CD4-positive, alpha-beta memory T cell (primary cell): ENCODE measurements at regions of chr19 and their contacts with region 1.

Region 1: DNA sequence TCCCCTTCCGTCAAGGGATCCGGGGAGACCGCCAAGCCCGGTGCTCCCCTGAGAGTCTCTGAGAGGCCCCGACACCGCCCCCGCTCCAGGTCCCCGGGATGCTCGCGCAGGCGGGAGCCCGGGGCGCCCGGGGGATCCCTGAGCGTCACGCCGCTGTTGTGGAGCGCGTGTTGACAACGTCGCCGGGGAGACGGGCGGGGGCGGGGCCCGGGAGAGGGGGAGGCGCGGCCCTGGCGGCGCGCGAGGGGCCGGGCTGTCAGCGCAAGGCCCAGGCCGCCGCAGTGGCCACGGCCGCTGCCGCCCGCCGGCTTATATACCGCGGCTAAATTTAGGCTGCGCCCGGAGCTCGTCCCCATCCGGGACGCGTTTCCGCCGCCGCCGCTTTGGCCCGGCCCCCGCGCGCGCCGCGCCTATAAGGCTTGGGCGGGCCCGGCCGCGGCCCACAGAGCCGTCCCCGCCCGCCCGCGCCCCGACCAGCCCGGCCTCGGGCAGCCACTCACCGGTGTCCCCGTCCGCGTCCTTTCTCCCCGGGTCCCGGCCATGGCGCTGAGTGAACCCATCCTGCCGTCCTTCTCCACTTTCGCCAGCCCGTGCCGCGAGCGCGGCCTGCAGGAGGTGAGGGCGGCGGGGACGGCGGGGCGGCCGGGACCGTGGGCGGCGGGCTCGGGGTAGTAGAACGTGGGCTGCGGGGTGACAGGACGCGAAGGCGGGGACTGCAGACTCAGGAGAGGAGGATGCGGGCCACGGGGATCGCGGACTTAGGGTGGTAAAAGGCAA is at the start of gene KLF2:
- DNase-seq: peak; percentile 95 to 98 (median 96)
- H3K4me3 ChIP-seq: peak within 1 kb of the TSS; percentile 38 to 100
- H3K4me3 Mint-ChIP-seq: peak within 1 kb of the TSS; percentile 79 to 87 (median 83)
- H3K27ac ChIP-seq: peak within 1 kb of the TSS; percentile 95
- H3K27ac Mint-ChIP-seq: peak within 1 kb of the TSS; percentile 96 to 99 (median 98)
- H3K4me1 ChIP-seq: peaks cover 34% of the 10 kb centered on the region
- H3K4me1 Mint-ChIP-seq: peaks cover 15 to 64% (median 31%) of the 10 kb centered on the region in 4 donors
- H3K27me3 ChIP-seq: no peaks in the 10 kb centered on the region
- H3K27me3 Mint-ChIP-seq: peaks cover 0 to 7% of the 10 kb centered on the region in 2 donors
- total RNA-seq, gene KLF2: 425 to 437 TPM

Region 2: DNA sequence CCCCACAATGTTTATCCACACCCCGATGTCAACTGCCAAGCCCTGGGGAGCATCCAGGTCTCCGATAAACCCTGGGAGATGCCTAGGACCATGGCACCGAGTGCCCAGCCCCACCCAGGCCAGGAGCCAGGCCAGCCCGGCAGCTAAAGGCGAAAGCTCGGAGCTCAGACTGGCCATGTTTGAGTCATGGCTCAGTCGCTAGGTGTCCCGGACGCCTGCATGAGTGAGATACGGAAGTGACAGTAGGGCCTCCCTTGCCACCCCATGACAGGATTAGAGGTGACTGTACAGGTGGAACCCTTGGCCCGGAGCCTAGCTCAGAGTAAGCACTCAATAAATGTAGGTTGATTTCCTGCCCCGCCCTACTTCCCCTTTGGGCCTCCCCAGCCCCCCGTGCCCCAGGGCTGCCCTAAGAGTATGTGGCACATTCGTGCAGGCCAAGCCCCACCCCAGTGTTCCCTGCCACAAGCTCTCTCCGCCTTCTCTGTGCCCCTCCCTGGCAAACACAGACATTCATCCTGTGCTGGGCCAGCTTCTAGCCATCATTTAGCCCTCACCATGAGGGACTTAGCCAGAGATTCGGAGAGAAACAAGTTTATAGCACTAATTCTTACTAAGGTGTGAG is 254.1 kb before region 1 on chr19:
- CTCF ChIA-PET with region 1: no interaction called
- POLR2A ChIA-PET with region 1: interaction called, 29 read pairs
- intact Hi-C with region 1: loop called (anchors 5 kb)
- DNase-seq: peak; percentile 87 to 98 (median 94)
- H3K4me3 ChIP-seq: peak overlapping the region in 1 of 2 donors; percentile 46
- H3K4me3 Mint-ChIP-seq: peak overlapping the region in 3 of 8 donors; percentile 60 to 80 (median 77)
- H3K27ac ChIP-seq: peak overlapping the region; percentile 89
- H3K27ac Mint-ChIP-seq: no peak overlapping the region
- H3K4me1 ChIP-seq: peaks cover 78% of the 10 kb centered on the region
- H3K4me1 Mint-ChIP-seq: peaks cover 25 to 46% (median 38%) of the 10 kb centered on the region in 4 donors
- H3K27me3 ChIP-seq: no peaks in the 10 kb centered on the region
- H3K27me3 Mint-ChIP-seq: no peaks in the 10 kb centered on the region

Region 3: GRCh38 chr19:16197622-16198369 is 126.8 kb before region 1 on chr19 and contains the start of gene AP1M1:
- CTCF ChIA-PET with region 1: no interaction called
- POLR2A ChIA-PET with region 1: interaction called, 17 read pairs
- intact Hi-C with region 1: no loop called
- DNase-seq: peak; percentile 97 to 98 (median 98)
- H3K4me3 ChIP-seq: peak within 1 kb of the TSS; percentile 70 to 88
- H3K4me3 Mint-ChIP-seq: peak within 1 kb of the TSS; percentile 87 to 95 (median 90)
- H3K27ac ChIP-seq: peak within 1 kb of the TSS; percentile 90
- H3K27ac Mint-ChIP-seq: peak within 1 kb of the TSS; percentile 95 to 99 (median 98)
- H3K4me1 ChIP-seq: peaks cover 27% of the 10 kb centered on the region
- H3K4me1 Mint-ChIP-seq: peaks cover 25 to 53% (median 40%) of the 10 kb centered on the region in 4 donors
- H3K27me3 ChIP-seq: no peaks in the 10 kb centered on the region
- H3K27me3 Mint-ChIP-seq: no peaks in the 10 kb centered on the region
- total RNA-seq, gene AP1M1: 107 TPM

Region 4: DNA sequence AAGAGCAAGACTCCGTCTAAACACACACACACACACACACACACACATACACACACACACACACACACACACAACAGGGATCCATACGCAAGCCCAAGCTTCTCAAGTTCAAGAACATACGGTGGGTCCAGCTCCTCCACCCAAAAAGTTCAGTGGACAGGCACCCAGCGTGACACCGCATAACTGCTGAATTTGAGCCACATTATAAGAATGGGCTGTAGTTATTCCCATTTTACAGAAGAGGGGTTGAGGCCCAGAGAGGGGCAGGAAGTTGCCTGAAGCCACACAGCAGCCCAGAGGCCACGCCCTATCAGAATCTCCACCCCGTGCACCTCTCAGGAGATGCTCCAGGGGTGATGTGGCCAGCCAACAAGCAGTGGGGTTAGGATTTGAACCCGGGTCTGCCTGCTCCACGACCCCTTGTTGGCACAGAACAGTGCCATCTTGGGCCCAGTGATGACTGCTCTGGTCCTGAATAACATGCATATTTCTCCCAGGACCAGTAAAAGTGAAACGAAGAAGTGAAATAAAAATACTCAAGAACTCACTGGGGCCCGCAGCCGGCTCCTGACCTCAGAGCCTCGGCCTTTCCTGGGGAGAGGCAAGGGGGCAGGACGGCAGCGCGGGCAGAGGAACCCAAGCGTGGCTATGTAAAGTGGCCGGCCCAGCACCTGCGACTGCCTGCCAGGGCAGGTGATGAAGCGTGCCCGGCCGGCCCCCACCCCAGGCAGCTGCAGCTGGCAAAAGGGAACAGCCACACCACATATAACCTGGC is 65.0 kb before region 1 on chr19:
- CTCF ChIA-PET with region 1: no interaction called
- POLR2A ChIA-PET with region 1: interaction called, 342 read pairs
- intact Hi-C with region 1: no loop called
- DNase-seq: no peak
- H3K4me3 ChIP-seq: no peak overlapping the region
- H3K4me3 Mint-ChIP-seq: peak overlapping the region in 5 of 8 donors; percentile 2 to 62 (median 18)
- H3K27ac ChIP-seq: no peak overlapping the region
- H3K27ac Mint-ChIP-seq: peak overlapping the region in 2 of 7 donors; percentile 84 to 86
- H3K4me1 ChIP-seq: peaks cover 59% of the 10 kb centered on the region
- H3K4me1 Mint-ChIP-seq: peaks cover 23 to 70% (median 44%) of the 10 kb centered on the region in 4 donors
- H3K27me3 ChIP-seq: no peaks in the 10 kb centered on the region
- H3K27me3 Mint-ChIP-seq: no peaks in the 10 kb centered on the region

Region 5: DNA sequence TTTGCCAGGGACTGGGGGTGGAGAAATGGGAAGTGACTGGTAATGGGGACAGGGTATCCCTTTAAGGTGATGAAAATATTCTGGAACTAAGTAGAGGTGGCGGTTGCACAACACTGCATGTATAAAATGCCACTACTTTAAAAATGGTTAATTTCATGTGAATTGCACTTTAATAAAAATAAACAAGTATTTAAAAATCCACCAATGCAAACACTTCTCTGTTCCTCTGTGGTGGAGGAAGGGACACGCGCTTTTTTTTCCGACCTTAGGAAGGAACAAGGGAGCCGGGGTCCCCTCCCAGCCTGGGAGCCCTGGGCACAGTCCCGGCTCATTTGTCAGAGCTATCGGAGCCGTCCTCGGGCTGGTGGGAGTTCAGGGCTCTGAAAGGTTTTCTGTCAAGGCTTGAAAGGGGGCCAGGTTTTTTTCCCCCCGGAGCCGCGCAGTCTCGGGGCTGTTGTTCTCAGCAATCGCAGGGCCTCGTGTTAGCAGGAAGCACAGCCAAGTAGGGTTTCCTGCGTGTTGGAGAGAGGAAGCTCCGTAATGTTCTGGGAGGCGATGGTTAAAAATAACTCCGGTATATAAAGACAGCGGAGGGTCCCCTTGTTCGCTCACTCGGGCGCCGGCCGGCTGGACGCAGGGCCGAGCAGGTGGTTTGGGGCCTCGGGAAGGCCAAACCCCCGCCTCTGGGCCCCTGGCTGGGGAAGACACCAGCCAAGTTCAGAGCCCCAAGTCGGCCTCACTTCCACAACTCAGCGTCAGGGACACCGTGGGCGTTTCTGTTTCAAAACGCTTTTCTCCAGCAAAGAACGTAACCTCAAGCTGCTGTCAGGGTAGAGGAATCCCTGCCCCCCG is 41.1 kb before region 1 on chr19:
- CTCF ChIA-PET with region 1: no interaction called
- POLR2A ChIA-PET with region 1: interaction called, 50 read pairs
- intact Hi-C with region 1: loop called (anchors 5 kb)
- DNase-seq: peak; percentile 42 to 60 (median 51)
- H3K4me3 ChIP-seq: peak overlapping the region; percentile 13 to 46
- H3K4me3 Mint-ChIP-seq: peak overlapping the region; percentile 51 to 84 (median 74)
- H3K27ac ChIP-seq: peak overlapping the region; percentile 31
- H3K27ac Mint-ChIP-seq: peak overlapping the region; percentile 57 to 94 (median 89)
- H3K4me1 ChIP-seq: peaks cover 23% of the 10 kb centered on the region
- H3K4me1 Mint-ChIP-seq: peaks cover 14 to 43% (median 23%) of the 10 kb centered on the region in 4 donors
- H3K27me3 ChIP-seq: no peaks in the 10 kb centered on the region
- H3K27me3 Mint-ChIP-seq: peaks cover 0 to 4% of the 10 kb centered on the region in 2 donors

Region 6: DNA sequence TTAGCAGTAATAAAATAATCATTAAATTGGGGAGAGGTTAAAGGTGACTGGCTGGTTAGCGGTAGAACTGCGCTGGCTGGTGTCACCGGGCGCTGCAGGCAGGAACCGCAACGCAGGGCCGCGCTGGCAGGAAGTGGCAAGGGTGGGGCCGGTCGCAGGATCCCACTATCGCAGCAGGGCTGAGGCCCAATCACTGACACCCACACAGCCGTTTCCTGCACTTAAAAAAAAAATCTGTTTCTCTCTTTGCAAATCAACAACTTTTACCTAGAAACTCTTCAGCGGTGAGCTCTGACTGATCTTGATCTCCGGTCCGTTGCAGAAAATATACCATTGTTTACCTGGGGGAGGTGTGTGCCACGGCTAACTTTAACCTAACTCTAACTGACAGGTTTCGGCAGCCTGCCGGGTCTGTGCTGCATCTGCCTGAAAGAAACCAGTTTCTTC is 47.0 kb after region 1 on chr19:
- CTCF ChIA-PET with region 1: interaction called, 143 read pairs
- POLR2A ChIA-PET with region 1: interaction called, 6,478 read pairs
- intact Hi-C with region 1: loop called (anchors 1 kb)
- DNase-seq: peak; percentile 95 to 97 (median 95)
- H3K4me3 ChIP-seq: peak overlapping the region in 1 of 2 donors; percentile 47
- H3K4me3 Mint-ChIP-seq: no peak overlapping the region
- H3K27ac ChIP-seq: peak overlapping the region; percentile 89
- H3K27ac Mint-ChIP-seq: no peak overlapping the region
- H3K4me1 ChIP-seq: peaks cover 98% of the 10 kb centered on the region
- H3K4me1 Mint-ChIP-seq: peaks cover 0 to 60% (median 31%) of the 10 kb centered on the region in 4 donors
- H3K27me3 ChIP-seq: no peaks in the 10 kb centered on the region
- H3K27me3 Mint-ChIP-seq: no peaks in the 10 kb centered on the region